GM12878 (cell line): ENCODE measurements at regions of chr14 and their contacts with region 1.

Region 1: GRCh38 chr14:75827331-75827730 is 154.5 kb downstream of the TGFB3 start:
- DNase-seq: no peak
- ATAC-seq: no peak
- H3K4me3 ChIP-seq: no peak overlapping the region
- H3K27ac ChIP-seq: no peak overlapping the region
- H3K4me1 ChIP-seq: peaks cover 24% of the 10 kb centered on the region
- H3K27me3 ChIP-seq: no peaks in the 10 kb centered on the region
- CTCF ChIP-seq: no peak
- EP300 ChIP-seq: no peak
- POLR2A ChIP-seq: no peak
- RAD21 ChIP-seq: no peak

Region 2: GRCh38 chr14:75720842-75721498 is 106.4 kb before region 1 on chr14:
- CTCF ChIA-PET with region 1: no interaction called
- POLR2A ChIA-PET with region 1: no interaction called
- RAD21 ChIA-PET with region 1: no interaction called
- SMC1A ChIA-PET with region 1: no interaction called
- in situ Hi-C with region 1: no loop called
- intact Hi-C with region 1: no loop called
- DNase-seq: no peak
- ATAC-seq: no peak
- H3K4me3 ChIP-seq: no peak overlapping the region
- H3K27ac ChIP-seq: no peak overlapping the region
- H3K4me1 ChIP-seq: peaks cover 6% of the 10 kb centered on the region
- H3K27me3 ChIP-seq: no peaks in the 10 kb centered on the region
- CTCF ChIP-seq: no peak
- EP300 ChIP-seq: no peak
- POLR2A ChIP-seq: no peak
- RAD21 ChIP-seq: no peak

Region 3: DNA sequence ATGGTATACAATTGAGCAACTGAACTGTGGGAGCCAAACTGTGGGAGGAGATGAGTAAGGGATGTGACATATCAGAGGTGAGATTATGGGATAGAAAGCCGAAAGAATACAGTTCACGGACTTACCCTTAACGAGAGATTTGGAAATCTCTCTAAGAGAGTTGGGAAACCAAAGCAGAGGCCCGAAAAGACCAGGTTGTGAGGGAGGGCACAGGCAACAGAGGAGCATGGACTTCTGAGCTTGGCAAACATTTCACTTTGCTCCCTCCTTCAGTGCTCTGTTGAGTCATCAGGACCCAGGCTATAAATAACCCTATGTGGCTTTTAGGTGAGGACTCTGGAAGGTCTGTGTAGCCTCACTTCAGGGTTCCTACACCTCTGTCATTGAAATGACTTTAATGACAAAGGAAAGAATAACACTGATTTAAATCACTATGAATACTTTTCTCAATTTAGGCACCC is 33.9 kb after region 1 on chr14:
- CTCF ChIA-PET with region 1: no interaction called
- POLR2A ChIA-PET with region 1: interaction called, 10 read pairs
- RAD21 ChIA-PET with region 1: no interaction called
- SMC1A ChIA-PET with region 1: no interaction called
- in situ Hi-C with region 1: no loop called
- intact Hi-C with region 1: no loop called
- DNase-seq: no peak
- ATAC-seq: no peak
- H3K4me3 ChIP-seq: no peak overlapping the region
- H3K27ac ChIP-seq: no peak overlapping the region
- H3K4me1 ChIP-seq: no peaks in the 10 kb centered on the region
- H3K27me3 ChIP-seq: no peaks in the 10 kb centered on the region
- CTCF ChIP-seq: no peak
- EP300 ChIP-seq: no peak
- POLR2A ChIP-seq: no peak
- RAD21 ChIP-seq: no peak

Region 4: DNA sequence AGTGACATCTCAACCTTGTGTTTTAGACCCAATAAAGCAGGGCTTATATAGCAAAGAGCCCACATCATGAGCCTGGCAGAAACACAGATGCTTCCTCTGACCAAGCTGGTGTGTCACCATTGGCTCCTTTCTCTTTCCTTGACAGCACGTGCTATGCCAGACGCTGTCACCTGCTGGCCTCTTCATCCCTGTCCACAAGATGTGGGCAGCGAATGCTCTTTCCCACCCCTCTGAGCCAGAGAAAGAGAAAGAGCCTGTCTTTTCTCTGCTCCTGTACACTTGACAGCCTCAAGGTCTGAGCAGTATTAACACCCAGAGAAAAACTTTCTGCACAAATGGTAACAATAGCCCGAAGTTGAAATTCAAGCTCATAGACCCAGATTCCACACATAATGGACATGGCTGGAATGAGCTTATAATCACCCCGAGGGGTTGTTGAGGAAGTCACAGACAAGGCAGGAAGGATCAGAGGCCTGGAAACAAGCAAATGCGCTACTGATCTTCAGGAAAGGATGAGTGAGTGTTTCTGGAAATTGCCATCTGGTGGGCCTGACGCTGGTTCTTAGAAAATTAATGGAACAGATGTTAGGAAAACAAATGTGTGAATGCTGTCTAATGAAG is 145.6 kb after region 1 on chr14:
- CTCF ChIA-PET with region 1: no interaction called
- POLR2A ChIA-PET with region 1: no interaction called
- RAD21 ChIA-PET with region 1: no interaction called
- SMC1A ChIA-PET with region 1: no interaction called
- in situ Hi-C with region 1: no loop called
- intact Hi-C with region 1: no loop called
- DNase-seq: no peak
- ATAC-seq: no peak
- H3K4me3 ChIP-seq: no peak overlapping the region
- H3K27ac ChIP-seq: no peak overlapping the region
- H3K4me1 ChIP-seq: peaks cover 10% of the 10 kb centered on the region
- H3K27me3 ChIP-seq: no peaks in the 10 kb centered on the region
- CTCF ChIP-seq: no peak
- EP300 ChIP-seq: no peak
- POLR2A ChIP-seq: no peak
- RAD21 ChIP-seq: no peak

Region 5: DNA sequence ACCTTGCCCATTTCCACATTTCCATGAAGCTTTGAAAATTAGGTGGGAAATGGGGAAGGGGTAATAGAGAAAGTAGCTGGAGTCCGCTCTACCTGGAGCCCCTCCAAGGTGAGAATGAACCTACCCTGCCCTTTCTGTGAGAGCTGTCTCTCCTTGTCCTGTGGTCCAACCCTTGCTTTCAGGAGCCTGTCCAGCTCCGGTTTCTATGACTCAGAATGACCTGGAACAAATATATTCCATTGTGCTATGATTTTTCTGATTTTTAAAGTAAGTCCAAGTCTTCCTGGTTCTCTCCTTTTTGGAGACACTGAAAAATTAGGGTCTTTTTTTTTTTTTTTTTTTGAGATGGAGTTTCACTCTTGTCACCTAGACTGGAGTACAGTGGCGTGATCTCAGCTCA is 844.8 kb after region 1 on chr14:
- CTCF ChIA-PET with region 1: no interaction called
- POLR2A ChIA-PET with region 1: no interaction called
- RAD21 ChIA-PET with region 1: no interaction called
- SMC1A ChIA-PET with region 1: no interaction called
- in situ Hi-C with region 1: no loop called
- intact Hi-C with region 1: no loop called
- DNase-seq: no peak
- ATAC-seq: no peak
- H3K4me3 ChIP-seq: no peak overlapping the region
- H3K27ac ChIP-seq: no peak overlapping the region
- H3K4me1 ChIP-seq: no peaks in the 10 kb centered on the region
- H3K27me3 ChIP-seq: peaks cover 0 to 2% of the 10 kb centered on the region in 2 experiments; a peak in 3 of 4 replicates
- CTCF ChIP-seq: no peak
- EP300 ChIP-seq: no peak
- POLR2A ChIP-seq: no peak
- RAD21 ChIP-seq: no peak